ENCODE measurements at regions of chr9 and their contacts with region 1.

Region 1: DNA sequence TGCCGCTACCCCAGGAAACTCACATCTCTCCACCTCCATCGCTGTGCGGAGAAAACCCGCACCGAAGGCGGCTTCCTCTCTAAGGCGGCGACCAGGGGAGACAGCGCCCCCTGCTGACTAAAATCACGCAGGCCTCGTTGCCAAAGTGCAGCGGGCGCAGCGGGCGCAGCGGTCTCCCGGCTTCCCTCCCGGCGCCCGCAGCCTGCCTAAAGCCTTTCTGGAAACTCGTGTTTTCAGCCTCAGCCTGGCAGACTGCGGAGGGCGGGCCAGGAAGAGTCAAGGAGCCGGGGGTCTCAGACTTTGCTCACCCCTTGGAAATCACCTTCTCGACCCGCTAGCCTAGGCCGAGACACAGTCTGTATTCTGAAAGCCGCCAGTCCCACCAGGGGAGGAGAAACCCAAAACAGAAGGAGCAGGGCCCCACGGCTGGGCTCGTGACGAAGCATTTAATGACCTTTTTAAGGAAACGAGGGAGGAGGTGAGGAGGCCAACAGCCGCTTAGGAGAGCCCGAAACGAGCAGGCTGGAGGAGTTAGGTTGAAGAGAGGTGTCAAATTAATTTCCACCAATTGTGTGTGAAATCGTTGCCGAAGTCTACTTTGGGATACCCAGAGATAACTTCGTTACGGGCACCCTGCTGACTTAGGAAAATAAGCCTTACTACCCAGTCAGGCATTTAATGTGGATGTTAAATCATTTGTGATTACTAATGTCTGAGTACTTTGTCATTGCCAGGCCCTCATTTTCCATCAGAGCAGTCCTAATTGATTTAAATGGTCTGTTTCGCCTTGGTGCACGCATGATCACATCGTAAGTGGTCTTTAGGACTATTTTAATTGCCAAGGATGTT is 7.3 kb upstream of the FOXB2 start:
- DNase-seq: peak; percentile 86
- ATAC-seq: peak; percentile 77
- H3K4me3 Mint-ChIP-seq: peak overlapping the region; percentile 46
- H3K27ac Mint-ChIP-seq: no peak overlapping the region
- H3K4me1 Mint-ChIP-seq: peaks cover 17% of the 10 kb centered on the region
- H3K27me3 Mint-ChIP-seq: peaks cover 64% of the 10 kb centered on the region

Region 2: DNA sequence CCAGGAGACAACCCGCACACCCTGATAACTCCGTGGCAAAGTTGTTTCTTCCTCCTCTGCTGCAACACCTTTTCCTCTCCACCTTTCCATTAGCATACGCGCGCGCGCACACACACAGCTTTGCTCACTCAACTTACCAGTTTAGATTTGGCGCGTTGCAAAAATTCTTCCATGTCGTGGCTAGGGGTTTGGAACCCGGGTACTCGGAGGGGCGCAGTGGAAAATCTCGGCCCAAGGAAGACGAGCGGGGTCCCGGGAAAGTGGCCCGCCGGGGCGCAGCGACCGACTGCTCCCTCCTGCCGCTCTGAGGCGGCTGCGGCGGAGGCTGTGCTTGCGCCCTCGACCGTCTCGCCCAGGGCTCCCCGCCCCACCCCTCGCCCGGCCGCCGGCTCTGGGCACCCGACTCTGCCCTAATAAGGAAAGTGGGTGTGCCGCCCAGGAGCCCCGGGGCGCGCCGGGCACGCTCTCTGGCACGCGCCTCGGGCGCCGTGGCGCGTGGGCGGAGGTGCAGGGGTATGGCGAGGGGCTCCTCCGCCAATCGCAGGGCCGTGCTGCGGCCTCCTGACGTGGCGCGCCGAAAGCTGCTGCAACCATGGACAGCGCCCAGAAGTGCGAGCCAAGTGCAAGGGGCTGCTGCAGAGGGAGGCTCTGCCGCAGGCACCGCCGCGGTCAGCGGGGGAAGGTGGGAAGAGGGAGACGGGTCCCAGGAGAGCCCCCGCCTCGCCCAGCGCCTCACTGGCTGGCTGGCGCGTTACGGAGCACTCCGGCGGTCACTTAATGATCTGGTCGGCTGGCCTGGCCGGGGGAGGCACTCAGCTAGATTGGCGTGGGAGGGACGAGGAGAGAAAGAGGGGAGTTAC is 106.2 kb before region 1 on chr9 and contains the start of gene PRUNE2:
- CTCF ChIA-PET with region 1: interaction called, 3 read pairs
- POLR2A ChIA-PET with region 1: no interaction called
- intact Hi-C with region 1: loop called in 1 of 2 experiments (anchors 5 kb)
- DNase-seq: peak; percentile 60
- ATAC-seq: peak; percentile 75
- H3K4me3 Mint-ChIP-seq: no peak within 1 kb of the TSS
- H3K27ac Mint-ChIP-seq: no peak within 1 kb of the TSS
- H3K4me1 Mint-ChIP-seq: peaks cover 4% of the 10 kb centered on the region
- H3K27me3 Mint-ChIP-seq: peaks cover 38% of the 10 kb centered on the region
- total RNA-seq, gene PRUNE2: 0.53 to 0.57 TPM